ENCODE measurements at regions of chr18 and their contacts with region 1.

Region 1: DNA sequence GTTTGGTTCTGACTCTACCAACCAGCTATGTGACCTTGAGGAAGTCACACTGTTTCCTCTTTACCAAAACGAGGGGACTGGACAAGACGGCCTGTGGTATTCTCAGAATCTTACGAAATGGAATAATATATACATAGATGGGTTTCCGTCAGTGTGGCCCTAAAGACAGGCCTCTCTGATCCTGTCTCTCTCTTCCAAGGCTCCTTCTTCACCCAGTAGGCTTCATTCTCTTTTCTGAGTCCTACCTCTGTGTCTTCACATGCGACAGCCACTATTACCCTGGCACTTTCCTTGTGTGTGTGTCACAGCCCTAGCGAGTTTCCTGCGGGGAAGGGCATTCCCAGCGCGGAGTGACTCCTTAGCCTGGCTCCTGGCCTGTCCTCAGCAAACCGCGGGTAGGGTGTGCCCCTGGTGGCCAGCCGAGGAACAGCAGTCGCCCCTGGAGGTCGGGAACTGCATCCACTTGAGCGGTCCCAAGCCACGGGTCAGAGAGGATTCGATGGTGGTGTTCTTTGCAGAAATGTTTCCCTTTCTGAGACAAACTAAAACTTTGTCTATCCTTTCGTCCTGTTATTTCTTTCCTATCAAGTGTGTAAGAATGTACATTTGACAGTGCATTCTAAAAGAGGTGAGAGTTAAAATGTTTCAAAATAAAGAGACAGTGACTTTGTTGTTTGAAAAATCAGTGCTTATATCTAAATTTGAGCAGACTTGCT is 63.3 kb downstream of the RAB31 start:
- DNase-seq: peak; percentile 73 to 92 (median 89)
- H3K4me3 ChIP-seq: peak overlapping the region in 2 of 3 experiments; percentile 9 to 58
- H3K4me3 Mint-ChIP-seq: peak overlapping the region; percentile 73 to 89
- H3K27ac ChIP-seq: peak overlapping the region; percentile 95 to 97
- H3K27ac Mint-ChIP-seq: peak overlapping the region; percentile 98 to 99 (median 99)
- H3K4me1 ChIP-seq: peaks cover 73 to 79% of the 10 kb centered on the region in 2 donors
- H3K4me1 Mint-ChIP-seq: peaks cover 94% of the 10 kb centered on the region
- H3K27me3 ChIP-seq: no peaks in the 10 kb centered on the region
- H3K27me3 Mint-ChIP-seq: peaks cover 1% of the 10 kb centered on the region in 3 donors
- CTCF ChIP-seq: peak; percentile 100

Region 2: GRCh38 chr18:8816816-8817215 is 954.6 kb before region 1 on chr18:
- intact Hi-C with region 1: no loop called
- DNase-seq: no peak
- H3K4me3 ChIP-seq: no peak overlapping the region
- H3K4me3 Mint-ChIP-seq: no peak overlapping the region
- H3K27ac ChIP-seq: no peak overlapping the region
- H3K27ac Mint-ChIP-seq: no peak overlapping the region
- H3K4me1 ChIP-seq: no peaks in the 10 kb centered on the region
- H3K4me1 Mint-ChIP-seq: peaks cover 2% of the 10 kb centered on the region
- H3K27me3 ChIP-seq: no peaks in the 10 kb centered on the region
- H3K27me3 Mint-ChIP-seq: peaks cover 0 to 4% (median 2%) of the 10 kb centered on the region in 3 donors
- CTCF ChIP-seq: no peak

Region 3: GRCh38 chr18:9663377-9663776 is 108.0 kb before region 1 on chr18:
- intact Hi-C with region 1: no loop called
- DNase-seq: no peak
- H3K4me3 ChIP-seq: no peak overlapping the region
- H3K4me3 Mint-ChIP-seq: no peak overlapping the region
- H3K27ac ChIP-seq: no peak overlapping the region
- H3K27ac Mint-ChIP-seq: no peak overlapping the region
- H3K4me1 ChIP-seq: no peaks in the 10 kb centered on the region
- H3K4me1 Mint-ChIP-seq: no peaks in the 10 kb centered on the region
- H3K27me3 ChIP-seq: no peaks in the 10 kb centered on the region
- H3K27me3 Mint-ChIP-seq: peaks cover 0 to 9% (median 3%) of the 10 kb centered on the region in 3 donors
- CTCF ChIP-seq: no peak

Region 4: DNA sequence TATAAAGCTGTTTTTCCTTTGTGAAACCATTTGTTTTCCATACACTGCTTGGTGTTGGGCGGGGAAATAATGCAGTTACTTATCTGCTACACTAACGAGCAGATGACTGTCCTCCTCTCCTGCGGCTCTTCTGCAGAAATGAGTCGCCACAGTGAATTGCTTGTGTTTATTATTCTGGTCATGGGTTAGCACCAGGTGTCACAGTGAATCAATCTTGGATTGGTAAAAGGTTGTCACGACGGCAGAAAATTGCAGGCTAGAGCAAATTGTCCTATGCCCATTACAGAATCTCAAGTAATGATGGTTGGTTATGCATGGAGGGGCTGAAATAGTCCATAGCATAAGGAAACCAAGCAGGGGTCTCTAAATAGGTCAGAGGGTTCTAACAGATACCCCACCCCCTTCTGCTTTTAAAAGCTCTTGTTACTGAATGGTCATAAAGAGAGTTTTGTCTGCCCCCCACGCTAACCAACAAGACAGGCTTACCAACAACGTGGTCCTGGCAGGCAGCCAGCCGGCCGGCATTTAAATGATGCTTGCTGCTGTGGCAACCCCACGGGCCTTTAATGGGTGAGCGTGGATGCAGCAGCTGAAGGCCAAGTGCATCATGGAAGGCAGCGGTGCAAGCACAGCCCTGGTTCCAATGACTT is 33.8 kb before region 1 on chr18:
- intact Hi-C with region 1: loop called in 1 of 2 experiments (anchors 2 kb)
- DNase-seq: no peak
- H3K4me3 ChIP-seq: no peak overlapping the region
- H3K4me3 Mint-ChIP-seq: no peak overlapping the region
- H3K27ac ChIP-seq: peak overlapping the region in 1 of 2 donors; percentile 59
- H3K27ac Mint-ChIP-seq: peak overlapping the region in 2 of 7 donors; percentile 32 to 46
- H3K4me1 ChIP-seq: peaks cover 70 to 80% of the 10 kb centered on the region in 2 donors
- H3K4me1 Mint-ChIP-seq: peaks cover 83% of the 10 kb centered on the region
- H3K27me3 ChIP-seq: no peaks in the 10 kb centered on the region
- H3K27me3 Mint-ChIP-seq: no peaks in the 10 kb centered on the region
- CTCF ChIP-seq: no peak